MCF 10A (cell line): ENCODE measurements at regions of chr11 and their contacts with region 1.

Region 1: GRCh38 chr11:447923-448731 is 2.0 kb upstream of the PTDSS2 start:
- DNase-seq: peak; percentile 93
- H3K4me3 Mint-ChIP-seq: peak overlapping the region; percentile 87
- H3K27ac Mint-ChIP-seq: peak overlapping the region; percentile 83
- H3K4me1 Mint-ChIP-seq: peaks cover 18% of the 10 kb centered on the region
- H3K27me3 Mint-ChIP-seq: no peaks in the 10 kb centered on the region
- CTCF ChIP-seq: peak; percentile 89

Region 2: DNA sequence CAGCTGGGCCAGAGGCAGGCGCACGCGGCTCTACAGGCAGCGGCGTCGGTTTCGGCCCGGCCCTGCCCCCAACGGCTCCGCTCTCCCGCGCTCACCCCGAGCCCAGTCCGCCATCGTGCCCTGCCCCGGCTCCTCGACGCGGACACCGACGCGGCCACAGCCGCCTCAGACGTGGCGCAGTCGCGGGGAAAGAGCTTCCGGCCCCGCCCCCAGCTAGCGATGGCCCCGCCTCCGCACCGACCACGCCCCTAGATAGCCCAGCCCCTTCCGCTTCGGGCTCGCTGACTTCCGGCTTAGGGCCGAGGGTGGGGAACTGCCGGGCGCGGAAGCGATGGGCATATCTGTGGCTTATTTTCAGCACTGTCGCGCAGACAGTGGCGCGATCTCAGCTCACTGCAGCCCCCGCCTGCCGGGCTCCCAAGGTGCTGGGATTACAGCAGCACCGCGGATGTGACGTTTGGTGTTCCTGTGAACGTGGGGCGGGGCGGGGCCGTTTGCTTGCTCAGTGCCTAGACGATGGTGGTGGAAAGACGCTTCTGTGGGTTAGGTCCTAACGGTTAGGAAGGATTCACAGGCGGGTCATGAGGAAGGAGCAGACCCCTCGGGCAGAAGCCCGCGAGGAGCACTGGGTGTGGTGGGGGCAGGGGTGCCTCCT is 240.8 kb before region 1 on chr11 and contains the starts of genes BET1L and RIC8A:
- CTCF ChIA-PET with region 1: interaction called, 18 read pairs
- POLR2A ChIA-PET with region 1: interaction called, 52 read pairs
- intact Hi-C with region 1: loop called (anchors 5 kb)
- DNase-seq: peak; percentile 97
- H3K4me3 Mint-ChIP-seq: peak within 1 kb of the TSS; percentile 99
- H3K27ac Mint-ChIP-seq: peak within 1 kb of the TSS; percentile 99
- H3K4me1 Mint-ChIP-seq: peaks cover 15% of the 10 kb centered on the region
- H3K27me3 Mint-ChIP-seq: no peaks in the 10 kb centered on the region
- CTCF ChIP-seq: no peak
- total RNA-seq, gene BET1L: 65.3 and 66.1 TPM in 2 replicates
- total RNA-seq, gene RIC8A: 93.3 and 109 TPM in 2 replicates

Region 3: GRCh38 chr11:355581-356458 is 92.3 kb before region 1 on chr11:
- CTCF ChIA-PET with region 1: no interaction called
- POLR2A ChIA-PET with region 1: interaction called, 13 read pairs
- intact Hi-C with region 1: no loop called
- DNase-seq: peak; percentile 94
- H3K4me3 Mint-ChIP-seq: peak overlapping the region; percentile 35
- H3K27ac Mint-ChIP-seq: peak overlapping the region; percentile 62
- H3K4me1 Mint-ChIP-seq: peaks cover 28% of the 10 kb centered on the region
- H3K27me3 Mint-ChIP-seq: peaks cover 11% of the 10 kb centered on the region
- CTCF ChIP-seq: no peak

Region 4: GRCh38 chr11:406978-407739 is 41.0 kb before region 1 on chr11:
- CTCF ChIA-PET with region 1: interaction called, 7 read pairs
- POLR2A ChIA-PET with region 1: interaction called, 9 read pairs
- intact Hi-C with region 1: loop called (anchors 5 kb)
- DNase-seq: peak; percentile 82
- H3K4me3 Mint-ChIP-seq: peak overlapping the region; percentile 12
- H3K27ac Mint-ChIP-seq: no peak overlapping the region
- H3K4me1 Mint-ChIP-seq: no peaks in the 10 kb centered on the region
- H3K27me3 Mint-ChIP-seq: no peaks in the 10 kb centered on the region
- CTCF ChIP-seq: no peak

Region 5: DNA sequence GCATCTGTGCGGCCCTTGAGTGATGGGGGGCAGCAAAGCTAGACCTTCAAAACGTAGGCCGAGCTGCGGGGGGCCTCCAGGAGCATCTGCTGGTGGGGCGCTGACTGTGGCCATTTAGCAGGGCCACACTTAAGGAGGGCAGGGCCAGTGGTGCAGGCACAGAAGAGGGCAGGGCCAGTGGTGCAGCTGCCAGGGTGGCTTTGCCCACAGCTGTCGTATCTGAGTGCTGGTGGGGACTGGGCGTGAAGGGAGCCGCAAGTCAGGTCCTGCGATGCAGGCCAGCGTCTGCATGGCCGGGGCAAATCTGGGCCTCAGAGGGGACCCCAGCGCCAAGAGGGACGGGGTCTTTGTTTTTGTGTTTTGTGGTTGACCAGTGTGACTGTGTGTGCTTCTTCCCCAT is 31.2 kb after region 1 on chr11:
- CTCF ChIA-PET with region 1: interaction called, 12 read pairs
- POLR2A ChIA-PET with region 1: interaction called, 3 read pairs
- intact Hi-C with region 1: no loop called
- DNase-seq: no peak
- H3K4me3 Mint-ChIP-seq: no peak overlapping the region
- H3K27ac Mint-ChIP-seq: no peak overlapping the region
- H3K4me1 Mint-ChIP-seq: no peaks in the 10 kb centered on the region
- H3K27me3 Mint-ChIP-seq: no peaks in the 10 kb centered on the region
- CTCF ChIP-seq: no peak

Region 6: GRCh38 chr11:518463-519250 is 70.5 kb after region 1 on chr11:
- CTCF ChIA-PET with region 1: interaction called, 8 read pairs
- POLR2A ChIA-PET with region 1: interaction called, 9 read pairs
- intact Hi-C with region 1: loop called (anchors 1 kb)
- DNase-seq: peak; percentile 98
- H3K4me3 Mint-ChIP-seq: peak overlapping the region; percentile 60
- H3K27ac Mint-ChIP-seq: peak overlapping the region; percentile 85
- H3K4me1 Mint-ChIP-seq: peaks cover 10% of the 10 kb centered on the region
- H3K27me3 Mint-ChIP-seq: no peaks in the 10 kb centered on the region
- CTCF ChIP-seq: peak; percentile 98